Common myeloid progenitor, CD34-positive (primary cell): ENCODE measurements at regions of chr14 and their contacts with region 1.

Region 1: GRCh38 chr14:25431211-25432048 is 381.5 kb upstream of the STXBP6 start:
- DNase-seq: peak in 2 of 3 donors; percentile 49 to 59
- H3K4me3 ChIP-seq: no peak overlapping the region
- H3K27ac ChIP-seq: no peak overlapping the region
- H3K4me1 ChIP-seq: no peaks in the 10 kb centered on the region
- H3K27me3 ChIP-seq: no peaks in the 10 kb centered on the region

Region 2: GRCh38 chr14:25537846-25538455 is 106.5 kb after region 1 on chr14:
- CTCF ChIA-PET with region 1: interaction called, 11 read pairs
- POLR2A ChIA-PET with region 1: no interaction called
- DNase-seq: peak; percentile 10 to 53 (median 35)
- H3K4me3 ChIP-seq: no peak overlapping the region
- H3K27ac ChIP-seq: no peak overlapping the region
- H3K4me1 ChIP-seq: no peaks in the 10 kb centered on the region
- H3K27me3 ChIP-seq: no peaks in the 10 kb centered on the region